Activated T-helper 1 cell treated with anti-CD3 and anti-CD28 coated beads, Interleukin-12 subunit alpha, Interleukin-12 subunit beta, Interleukin-2, Interleukin-4 antibody, amounts not matched to agents 30 ng/mL and 10 ng/mL and 1 ng/mL, durations not matched to agents 14 hours and 24 hours and 36 hours (primary cell): ENCODE measurements at regions of chr9 and their contacts with region 1.

Region 1: GRCh38 chr9:112333639-112334431 is 416 bp upstream of the PTBP3 start:
- DNase-seq: peak; percentile 88
- H3K4me3 Mint-ChIP-seq: peak overlapping the region; percentile 97
- H3K27ac Mint-ChIP-seq: peak overlapping the region; percentile 94
- H3K4me1 Mint-ChIP-seq: peaks cover 31% of the 10 kb centered on the region
- H3K27me3 Mint-ChIP-seq: peaks cover 2% of the 10 kb centered on the region

Region 2: GRCh38 chr9:111631071-111631971 is 702.5 kb before region 1 on chr9 and contains the start of gene DNAJC25:
- intact Hi-C with region 1: loop called (anchors 1 kb)
- DNase-seq: peak; percentile 97
- H3K4me3 Mint-ChIP-seq: peak within 1 kb of the TSS; percentile 98
- H3K27ac Mint-ChIP-seq: peak within 1 kb of the TSS; percentile 93
- H3K4me1 Mint-ChIP-seq: peaks cover 54% of the 10 kb centered on the region
- H3K27me3 Mint-ChIP-seq: peaks cover 3% of the 10 kb centered on the region
- total RNA-seq, gene DNAJC25: 5.8 and 6.1 TPM in 2 replicates

Region 3: GRCh38 chr9:111992523-111992922 is 341.3 kb before region 1 on chr9:
- intact Hi-C with region 1: loop called (anchors 10 kb)
- DNase-seq: no peak
- H3K4me3 Mint-ChIP-seq: no peak overlapping the region
- H3K27ac Mint-ChIP-seq: peak overlapping the region; percentile 37
- H3K4me1 Mint-ChIP-seq: peaks cover 26% of the 10 kb centered on the region
- H3K27me3 Mint-ChIP-seq: peaks cover 14% of the 10 kb centered on the region

Region 4: GRCh38 chr9:112166172-112167140 is 167.4 kb before region 1 on chr9:
- intact Hi-C with region 1: no loop called
- DNase-seq: no peak
- H3K4me3 Mint-ChIP-seq: no peak overlapping the region
- H3K27ac Mint-ChIP-seq: no peak overlapping the region
- H3K4me1 Mint-ChIP-seq: peaks cover 39% of the 10 kb centered on the region
- H3K27me3 Mint-ChIP-seq: peaks cover 5% of the 10 kb centered on the region

Region 5: GRCh38 chr9:112180387-112180881 is 153.4 kb before region 1 on chr9:
- intact Hi-C with region 1: loop called (anchors 1 kb)
- DNase-seq: peak; percentile 62
- H3K4me3 Mint-ChIP-seq: peak overlapping the region; percentile 19
- H3K27ac Mint-ChIP-seq: peak overlapping the region; percentile 66
- H3K4me1 Mint-ChIP-seq: peaks cover 64% of the 10 kb centered on the region
- H3K27me3 Mint-ChIP-seq: no peaks in the 10 kb centered on the region

Region 6: DNA sequence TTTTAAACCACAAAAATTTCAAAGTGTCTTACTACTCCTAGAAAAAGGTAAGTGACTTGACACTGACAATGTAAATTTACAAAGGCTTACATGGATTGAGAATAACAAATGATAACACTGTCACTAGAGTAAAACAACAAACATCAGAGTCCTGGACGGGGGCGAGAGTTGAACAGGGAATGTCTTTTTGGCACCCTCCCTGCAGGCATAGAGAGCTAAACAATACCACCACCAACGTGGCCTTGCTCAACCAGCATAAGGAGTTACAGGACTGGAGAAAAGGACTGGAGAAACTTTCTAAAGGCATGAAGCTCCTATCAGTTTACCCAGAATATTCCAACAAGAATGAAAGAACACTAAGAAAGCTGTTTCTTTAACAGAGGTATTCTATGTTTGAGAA is 55.7 kb before region 1 on chr9:
- intact Hi-C with region 1: no loop called
- DNase-seq: no peak
- H3K4me3 Mint-ChIP-seq: no peak overlapping the region
- H3K27ac Mint-ChIP-seq: no peak overlapping the region
- H3K4me1 Mint-ChIP-seq: peaks cover 27% of the 10 kb centered on the region
- H3K27me3 Mint-ChIP-seq: no peaks in the 10 kb centered on the region

Region 7: GRCh38 chr9:112295174-112295573 is 38.7 kb before region 1 on chr9:
- intact Hi-C with region 1: no loop called
- DNase-seq: no peak
- H3K4me3 Mint-ChIP-seq: no peak overlapping the region
- H3K27ac Mint-ChIP-seq: no peak overlapping the region
- H3K4me1 Mint-ChIP-seq: peaks cover 11% of the 10 kb centered on the region
- H3K27me3 Mint-ChIP-seq: no peaks in the 10 kb centered on the region

Region 8: GRCh38 chr9:112315331-112316257 is 18.2 kb before region 1 on chr9:
- intact Hi-C with region 1: loop called (anchors 1 kb)
- DNase-seq: no peak
- H3K4me3 Mint-ChIP-seq: peak overlapping the region; percentile 46
- H3K27ac Mint-ChIP-seq: peak overlapping the region; percentile 79
- H3K4me1 Mint-ChIP-seq: peaks cover 52% of the 10 kb centered on the region
- H3K27me3 Mint-ChIP-seq: peaks cover 1% of the 10 kb centered on the region

Region 9: GRCh38 chr9:112486221-112487007 is 152.6 kb after region 1 on chr9 and contains the start of gene KIAA1958:
- intact Hi-C with region 1: loop called (anchors 1 kb)
- DNase-seq: peak; percentile 85
- H3K4me3 Mint-ChIP-seq: peak within 1 kb of the TSS; percentile 97
- H3K27ac Mint-ChIP-seq: peak within 1 kb of the TSS; percentile 96
- H3K4me1 Mint-ChIP-seq: peaks cover 36% of the 10 kb centered on the region
- H3K27me3 Mint-ChIP-seq: peaks cover 2% of the 10 kb centered on the region
- total RNA-seq, gene KIAA1958: 8.2 and 8.6 TPM in 2 replicates

Region 10: GRCh38 chr9:112556497-112557085 is 222.8 kb after region 1 on chr9:
- intact Hi-C with region 1: no loop called
- DNase-seq: no peak
- H3K4me3 Mint-ChIP-seq: no peak overlapping the region
- H3K27ac Mint-ChIP-seq: no peak overlapping the region
- H3K4me1 Mint-ChIP-seq: no peaks in the 10 kb centered on the region
- H3K27me3 Mint-ChIP-seq: no peaks in the 10 kb centered on the region